Sigmoid colon (tissue), 7 donors: ENCODE measurements at regions of chr12 and their contacts with region 1.

Region 1: DNA sequence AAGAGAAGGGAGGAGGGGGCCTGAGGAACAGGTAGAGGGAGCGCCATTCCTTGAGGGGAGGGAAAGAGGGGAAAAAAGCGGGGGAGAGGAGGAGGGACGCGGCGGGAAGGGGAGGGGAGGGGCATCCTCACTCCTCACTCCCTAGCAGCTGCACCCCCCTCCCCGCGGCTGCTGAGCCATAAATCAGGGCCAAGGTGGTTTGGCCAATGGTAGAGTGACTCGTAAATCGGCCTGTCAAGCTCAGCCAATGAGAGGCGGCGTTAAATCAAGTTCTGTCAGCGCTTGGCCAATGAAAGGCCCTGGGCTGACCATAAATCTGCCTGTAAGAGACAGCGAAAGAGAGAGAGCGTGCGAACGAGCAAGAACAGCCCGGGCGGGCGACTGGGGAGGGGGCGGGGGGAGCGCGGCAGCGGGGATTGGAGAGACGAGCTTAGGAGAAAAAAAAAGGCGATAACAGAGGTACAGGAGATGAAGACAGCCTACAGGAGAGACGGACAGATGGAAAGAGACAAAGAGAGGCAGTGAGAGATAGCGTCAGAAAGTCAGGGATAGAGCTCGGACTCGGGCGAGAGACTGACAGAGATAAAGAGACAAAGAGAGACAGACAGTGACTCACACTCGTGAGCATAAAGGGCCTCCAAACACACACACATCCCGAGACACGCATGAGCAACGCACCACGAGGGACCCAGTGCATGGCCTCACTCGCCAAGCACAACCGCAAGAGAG is 5.1 kb downstream of the GPR84 start:
- DNase-seq: peak; percentile 99
- H3K4me3 ChIP-seq: peak overlapping the region; percentile 42 to 59 (median 57)
- H3K27ac ChIP-seq: peak overlapping the region; percentile 85 to 91 (median 87)
- H3K4me1 ChIP-seq: peaks cover 0 to 55% (median 46%) of the 10 kb centered on the region in 4 donors
- H3K27me3 ChIP-seq: no peaks in the 10 kb centered on the region
- CTCF ChIP-seq: peak in 1 of 4 experiments; percentile 16
- EP300 ChIP-seq: peak; percentile 2 to 76 (median 58)
- POLR2A ChIP-seq: no peak

Region 2: DNA sequence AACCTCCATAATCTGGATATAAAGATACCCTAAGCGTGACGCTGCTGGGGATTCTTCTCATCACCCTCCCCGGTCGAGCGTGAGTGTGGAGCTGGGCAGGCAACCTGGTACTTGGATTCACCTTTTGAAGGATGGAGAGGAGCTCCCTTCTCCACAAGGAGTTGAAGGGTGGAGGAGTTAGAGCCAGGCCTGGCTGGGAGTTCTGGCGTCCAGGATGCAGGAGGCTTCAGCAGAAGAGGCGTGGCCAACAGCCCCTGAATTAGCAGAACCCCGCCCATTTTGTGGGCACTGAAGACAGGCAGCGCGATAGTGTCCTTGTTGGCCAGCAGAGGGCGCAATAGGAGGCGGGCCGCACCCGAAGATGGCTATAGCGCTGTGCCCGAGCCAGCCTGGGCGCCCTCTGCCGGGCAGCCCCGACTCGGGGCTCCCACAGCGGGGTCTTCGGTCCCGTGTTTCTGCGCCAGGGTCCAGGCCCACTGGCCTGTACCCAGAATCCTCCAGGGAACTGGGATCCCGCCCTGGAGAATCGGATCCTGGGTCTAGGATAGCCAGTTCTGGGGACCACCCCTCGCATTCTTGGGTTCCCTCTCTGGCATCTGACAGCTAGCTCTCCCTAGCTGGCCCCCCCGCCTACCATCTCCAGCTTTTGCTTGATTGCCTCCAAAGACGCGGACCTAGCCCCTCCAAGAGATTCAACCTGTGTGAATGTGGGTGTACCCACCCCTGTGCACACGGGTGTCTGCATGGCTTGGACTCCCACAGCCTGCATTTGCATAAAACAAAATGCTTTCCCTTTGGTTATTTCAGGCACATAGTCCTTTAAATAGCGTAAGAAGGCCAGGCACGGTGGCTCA is 144.4 kb before region 1 on chr12:
- intact Hi-C with region 1: loop called (anchors 5 kb)
- DNase-seq: peak; percentile 88
- H3K4me3 ChIP-seq: no peak overlapping the region
- H3K27ac ChIP-seq: no peak overlapping the region
- H3K4me1 ChIP-seq: peaks cover 0 to 29% (median 21%) of the 10 kb centered on the region in 4 donors
- H3K27me3 ChIP-seq: peaks cover 32 to 85% (median 81%) of the 10 kb centered on the region in 3 donors
- CTCF ChIP-seq: peak; percentile 44 to 87 (median 74)
- EP300 ChIP-seq: no peak
- POLR2A ChIP-seq: no peak

Region 3: DNA sequence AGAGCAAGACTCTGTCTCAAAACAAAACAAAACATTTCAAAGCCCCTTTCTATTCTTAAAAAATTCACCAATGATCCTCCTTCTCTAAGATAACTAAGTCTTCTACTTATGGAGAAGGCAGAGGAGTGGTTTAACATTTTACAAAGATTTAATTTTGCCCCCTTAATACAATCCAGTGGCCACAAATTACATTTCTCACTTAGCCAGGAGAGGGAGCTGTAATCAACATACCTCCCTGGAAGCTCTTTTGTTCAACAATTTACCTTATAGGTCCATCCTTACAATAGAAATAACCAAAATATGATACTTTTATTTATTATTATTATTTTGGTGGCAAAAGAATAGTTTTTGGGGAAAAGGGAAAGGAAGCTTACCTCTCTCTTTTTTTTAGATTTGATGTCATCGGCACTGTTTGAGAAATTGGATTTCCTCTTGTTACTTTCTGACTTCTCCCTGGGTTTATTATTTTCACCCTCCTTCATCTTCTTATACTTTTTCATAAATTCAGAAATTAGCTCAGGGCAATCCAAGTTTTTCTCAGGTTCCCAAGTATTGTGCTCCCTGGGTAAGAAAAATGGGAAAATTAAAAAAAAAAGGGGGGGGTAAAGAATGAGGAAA is 107.4 kb before region 1 on chr12:
- intact Hi-C with region 1: loop called (anchors 2 kb)
- DNase-seq: no peak
- H3K4me3 ChIP-seq: no peak overlapping the region
- H3K27ac ChIP-seq: no peak overlapping the region
- H3K4me1 ChIP-seq: peaks cover 0 to 16% (median 4%) of the 10 kb centered on the region in 4 donors
- H3K27me3 ChIP-seq: no peaks in the 10 kb centered on the region
- CTCF ChIP-seq: peak; percentile 11 to 52 (median 41)
- EP300 ChIP-seq: no peak
- POLR2A ChIP-seq: no peak

Region 4: DNA sequence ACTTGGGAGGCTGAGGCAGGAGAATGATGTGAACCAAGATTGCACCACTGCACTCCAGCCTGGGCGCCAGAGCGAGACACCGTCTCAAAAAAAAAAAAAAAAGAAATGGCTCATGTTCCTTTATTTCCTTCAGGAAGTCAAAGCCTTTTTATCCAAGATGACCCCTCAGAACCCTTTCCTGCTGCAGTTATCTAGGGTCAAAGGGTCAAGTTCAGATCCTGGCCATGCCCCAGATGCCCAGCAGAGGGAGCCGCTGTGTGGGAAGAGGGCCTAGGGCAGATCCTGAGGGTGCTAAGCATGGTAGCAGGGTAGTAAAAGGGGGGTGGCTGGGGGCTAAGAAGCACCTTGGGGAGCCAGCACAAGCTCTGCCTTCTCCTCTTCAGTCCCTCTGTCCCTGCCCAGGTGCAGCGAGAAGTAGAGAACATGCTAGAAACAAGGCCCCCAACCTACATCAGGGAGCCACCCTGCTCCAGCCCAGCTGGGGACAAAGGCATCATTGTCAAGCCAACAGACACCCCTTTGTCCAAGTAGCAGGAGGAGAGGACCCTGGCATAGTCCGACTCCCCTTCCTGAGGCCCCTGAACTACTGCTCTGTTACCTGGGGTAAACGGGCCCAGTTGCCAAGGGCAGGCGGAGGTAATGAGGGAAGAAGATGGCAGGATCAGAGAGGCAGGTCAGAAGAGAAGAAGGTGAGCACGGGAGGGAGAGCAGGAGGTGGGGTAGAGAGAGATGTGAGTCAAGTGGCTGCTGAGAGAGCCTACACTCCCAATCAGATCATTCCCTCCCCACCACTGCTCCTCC is 64.8 kb before region 1 on chr12:
- intact Hi-C with region 1: loop called (anchors 2 kb)
- DNase-seq: no peak
- H3K4me3 ChIP-seq: no peak overlapping the region
- H3K27ac ChIP-seq: no peak overlapping the region
- H3K4me1 ChIP-seq: no peaks in the 10 kb centered on the region
- H3K27me3 ChIP-seq: peaks cover 0 to 9% (median 9%) of the 10 kb centered on the region in 3 donors
- CTCF ChIP-seq: peak; percentile 56 to 84 (median 62)
- EP300 ChIP-seq: no peak
- POLR2A ChIP-seq: no peak

Region 5: GRCh38 chr12:54324617-54325441 is 34.4 kb before region 1 on chr12 and contains the start of gene COPZ1:
- intact Hi-C with region 1: loop called (anchors 2 kb)
- DNase-seq: peak; percentile 98
- H3K4me3 ChIP-seq: peak within 1 kb of the TSS; percentile 63 to 83 (median 77)
- H3K27ac ChIP-seq: peak within 1 kb of the TSS; percentile 86 to 89 (median 88)
- H3K4me1 ChIP-seq: peaks cover 0 to 43% (median 34%) of the 10 kb centered on the region in 4 donors
- H3K27me3 ChIP-seq: no peaks in the 10 kb centered on the region
- CTCF ChIP-seq: peak; percentile 40 to 68 (median 56)
- EP300 ChIP-seq: no peak
- POLR2A ChIP-seq: peak; percentile 60 to 76
- total RNA-seq, gene COPZ1: 39.6 to 74.2 (median 61.2) TPM

Region 6: DNA sequence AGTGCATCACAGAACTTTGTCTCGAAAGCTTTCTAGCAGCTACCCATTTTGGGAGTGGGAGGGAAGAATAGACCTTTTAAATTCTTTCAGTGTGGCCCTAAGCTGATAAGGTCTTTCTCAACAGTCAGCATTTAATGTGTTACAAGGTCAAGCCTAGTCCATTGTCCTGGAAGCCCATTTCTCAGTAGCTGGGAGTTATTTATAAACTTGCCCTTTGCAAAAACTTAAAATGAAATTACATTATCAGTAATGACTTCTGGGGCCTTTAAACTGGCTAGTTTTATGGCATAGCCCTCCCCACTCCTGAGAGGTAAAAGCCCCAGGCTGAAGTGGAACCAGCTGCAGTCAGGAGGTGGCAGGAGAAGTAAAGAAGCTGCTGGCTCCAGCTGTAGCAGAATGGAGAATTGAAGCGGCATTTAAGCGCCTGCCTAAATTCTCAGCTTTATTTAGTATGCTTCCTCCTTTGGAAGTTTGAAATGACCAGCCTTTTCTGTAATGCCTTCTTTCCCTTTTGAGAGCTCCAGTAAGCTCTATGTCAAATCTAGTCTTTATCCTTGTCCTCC is 21.8 kb before region 1 on chr12:
- intact Hi-C with region 1: loop called (anchors 1 kb)
- DNase-seq: no peak
- H3K4me3 ChIP-seq: no peak overlapping the region
- H3K27ac ChIP-seq: peak overlapping the region; percentile 51 to 84 (median 68)
- H3K4me1 ChIP-seq: peaks cover 0 to 81% (median 52%) of the 10 kb centered on the region in 4 donors
- H3K27me3 ChIP-seq: no peaks in the 10 kb centered on the region
- CTCF ChIP-seq: peak in 2 of 4 experiments; percentile 11 to 26
- EP300 ChIP-seq: no peak
- POLR2A ChIP-seq: no peak

Region 7: GRCh38 chr12:54439521-54440255 is 80.5 kb after region 1 on chr12:
- intact Hi-C with region 1: no loop called
- DNase-seq: no peak
- H3K4me3 ChIP-seq: no peak overlapping the region
- H3K27ac ChIP-seq: peak overlapping the region; percentile 40 to 100 (median 85)
- H3K4me1 ChIP-seq: peaks cover 0 to 75% (median 50%) of the 10 kb centered on the region in 4 donors
- H3K27me3 ChIP-seq: no peaks in the 10 kb centered on the region
- CTCF ChIP-seq: peak; percentile 67 to 86 (median 82)
- EP300 ChIP-seq: no peak
- POLR2A ChIP-seq: no peak